Heart left ventricle (tissue), 16 donors: ENCODE measurements at regions of chr6 and their contacts with region 1.

Region 1: DNA sequence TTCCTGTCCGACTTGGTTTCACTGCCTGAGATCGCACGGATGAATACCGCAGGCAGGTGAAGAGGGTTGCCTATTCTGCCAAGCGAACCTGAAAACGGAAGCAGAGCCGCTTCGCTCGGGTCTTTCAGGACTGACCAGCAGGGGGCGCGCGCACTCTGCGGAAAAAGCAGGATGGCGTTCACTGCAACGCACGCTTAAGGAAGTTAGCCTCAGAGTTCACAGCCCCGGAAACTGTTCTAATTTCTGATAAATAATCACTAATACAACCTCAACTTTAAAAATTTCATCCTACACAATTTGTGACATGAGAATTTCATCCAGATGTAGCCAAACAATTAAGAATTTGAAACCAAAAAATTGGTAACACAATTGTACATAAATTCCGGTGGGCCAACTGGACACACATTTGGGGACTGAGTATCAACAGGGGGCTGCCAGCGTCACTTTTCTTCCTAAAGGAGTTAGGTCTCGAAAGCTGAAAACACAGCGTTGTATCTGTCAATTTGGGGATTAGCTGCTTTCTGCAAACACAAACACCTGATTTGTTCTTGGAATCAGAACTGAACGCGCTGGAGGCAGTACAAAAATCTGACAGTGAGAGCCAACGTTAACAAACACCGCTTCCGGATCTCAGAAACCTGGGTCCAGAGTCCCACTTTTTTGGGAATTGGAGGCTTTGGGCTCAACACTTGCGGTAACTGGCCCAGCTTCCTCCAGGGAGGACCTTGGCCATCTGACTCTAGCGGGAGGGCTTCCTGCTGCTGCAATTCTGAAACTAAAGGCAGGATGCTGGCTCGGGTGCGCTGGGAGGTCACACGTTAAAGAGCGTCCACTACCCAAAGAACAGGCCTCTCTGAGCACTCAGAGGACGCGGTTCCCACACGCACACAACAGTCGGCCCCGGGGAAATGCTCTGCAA is 8.8 kb downstream of the PXDC1 start:
- DNase-seq: peak; percentile 83 to 93 (median 87)
- ATAC-seq: peak; percentile 60 to 85 (median 77)
- H3K4me3 ChIP-seq: peak overlapping the region in 9 of 12 donors; percentile 11 to 36 (median 25)
- H3K27ac ChIP-seq: peak overlapping the region; percentile 40 to 88 (median 80)
- H3K4me1 ChIP-seq: peaks cover 6 to 98% (median 80%) of the 10 kb centered on the region in 12 donors
- H3K27me3 ChIP-seq: no peaks in the 10 kb centered on the region
- CTCF ChIP-seq: peak; percentile 90 to 98 (median 95)
- POLR2A ChIP-seq: no peak

Region 2: GRCh38 chr6:3133515-3133914 is 609.2 kb before region 1 on chr6:
- intact Hi-C with region 1: loop called in 3 of 10 experiments (anchors 5 to 10 kb)
- DNase-seq: no peak
- ATAC-seq: no peak
- H3K4me3 ChIP-seq: no peak overlapping the region
- H3K27ac ChIP-seq: no peak overlapping the region
- H3K4me1 ChIP-seq: peaks cover 0 to 9% (median 0%) of the 10 kb centered on the region in 12 donors
- H3K27me3 ChIP-seq: no peaks in the 10 kb centered on the region
- CTCF ChIP-seq: no peak
- POLR2A ChIP-seq: no peak

Region 3: GRCh38 chr6:3868544-3868943 is 125.9 kb after region 1 on chr6:
- intact Hi-C with region 1: no loop called
- DNase-seq: no peak
- ATAC-seq: no peak
- H3K4me3 ChIP-seq: no peak overlapping the region
- H3K27ac ChIP-seq: no peak overlapping the region
- H3K4me1 ChIP-seq: no peaks in the 10 kb centered on the region
- H3K27me3 ChIP-seq: no peaks in the 10 kb centered on the region
- CTCF ChIP-seq: no peak
- POLR2A ChIP-seq: no peak

Region 4: DNA sequence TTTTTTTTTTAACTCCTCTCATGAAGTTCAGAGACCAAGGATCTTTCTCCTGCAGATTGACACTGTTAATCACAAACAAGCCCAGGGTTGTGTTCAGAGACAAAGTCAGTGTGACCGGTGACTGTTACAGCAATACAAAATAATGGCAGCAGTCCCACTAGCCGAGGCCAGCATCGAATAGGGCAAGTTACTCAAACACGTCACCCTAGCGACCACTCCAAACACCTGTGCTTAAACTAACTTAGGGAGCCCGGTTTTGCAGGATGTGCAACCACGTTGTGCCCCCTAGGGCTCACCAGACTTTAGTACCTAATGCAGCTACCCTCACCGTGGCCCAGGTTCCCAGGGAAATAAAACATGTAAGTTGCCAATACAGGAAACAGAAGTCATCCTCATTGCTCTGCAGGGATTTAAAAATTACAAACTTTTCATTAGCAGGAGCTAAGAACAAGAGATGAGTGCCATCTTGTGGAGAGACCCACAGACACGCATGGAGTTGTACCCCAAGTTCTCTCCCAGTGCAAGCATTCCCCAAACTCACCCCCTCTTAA is 144.5 kb after region 1 on chr6:
- intact Hi-C with region 1: loop called in 9 of 10 experiments (anchors 1 to 5 kb)
- DNase-seq: no peak
- ATAC-seq: peak in 3 of 4 donors; percentile 23 to 36 (median 25)
- H3K4me3 ChIP-seq: no peak overlapping the region
- H3K27ac ChIP-seq: peak overlapping the region in 1 of 12 donors; percentile 23
- H3K4me1 ChIP-seq: peaks cover 0 to 52% (median 26%) of the 10 kb centered on the region in 12 donors
- H3K27me3 ChIP-seq: no peaks in the 10 kb centered on the region
- CTCF ChIP-seq: peak; percentile 37 to 70 (median 56)
- POLR2A ChIP-seq: no peak

Region 5: DNA sequence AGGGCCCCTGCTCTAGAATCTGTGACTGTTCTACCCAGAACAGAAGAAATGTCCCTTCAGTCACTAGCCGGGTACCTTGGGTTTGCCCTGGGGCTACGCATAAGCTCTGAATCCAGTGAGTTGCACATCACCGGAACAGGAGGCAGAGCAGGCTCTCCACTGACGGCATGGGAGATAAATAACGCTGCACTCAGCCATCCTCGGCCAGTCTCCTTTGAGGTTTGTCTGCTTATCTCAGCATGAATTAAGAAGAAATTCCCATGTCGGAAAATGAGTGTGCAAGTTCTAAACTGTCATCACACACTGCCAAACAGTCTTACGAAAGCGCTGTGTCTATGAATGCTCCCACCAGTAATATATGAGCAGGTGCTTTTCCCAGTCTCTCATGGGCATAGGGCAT is 197.3 kb after region 1 on chr6:
- intact Hi-C with region 1: loop called in 1 of 10 experiments (anchors 5 kb)
- DNase-seq: no peak
- ATAC-seq: peak in 3 of 4 donors; percentile 33 to 61 (median 39)
- H3K4me3 ChIP-seq: no peak overlapping the region
- H3K27ac ChIP-seq: no peak overlapping the region
- H3K4me1 ChIP-seq: peaks cover 0 to 7% (median 0%) of the 10 kb centered on the region in 12 donors
- H3K27me3 ChIP-seq: peaks cover 0 to 8% (median 0%) of the 10 kb centered on the region in 9 donors
- CTCF ChIP-seq: no peak
- POLR2A ChIP-seq: no peak

Region 6: DNA sequence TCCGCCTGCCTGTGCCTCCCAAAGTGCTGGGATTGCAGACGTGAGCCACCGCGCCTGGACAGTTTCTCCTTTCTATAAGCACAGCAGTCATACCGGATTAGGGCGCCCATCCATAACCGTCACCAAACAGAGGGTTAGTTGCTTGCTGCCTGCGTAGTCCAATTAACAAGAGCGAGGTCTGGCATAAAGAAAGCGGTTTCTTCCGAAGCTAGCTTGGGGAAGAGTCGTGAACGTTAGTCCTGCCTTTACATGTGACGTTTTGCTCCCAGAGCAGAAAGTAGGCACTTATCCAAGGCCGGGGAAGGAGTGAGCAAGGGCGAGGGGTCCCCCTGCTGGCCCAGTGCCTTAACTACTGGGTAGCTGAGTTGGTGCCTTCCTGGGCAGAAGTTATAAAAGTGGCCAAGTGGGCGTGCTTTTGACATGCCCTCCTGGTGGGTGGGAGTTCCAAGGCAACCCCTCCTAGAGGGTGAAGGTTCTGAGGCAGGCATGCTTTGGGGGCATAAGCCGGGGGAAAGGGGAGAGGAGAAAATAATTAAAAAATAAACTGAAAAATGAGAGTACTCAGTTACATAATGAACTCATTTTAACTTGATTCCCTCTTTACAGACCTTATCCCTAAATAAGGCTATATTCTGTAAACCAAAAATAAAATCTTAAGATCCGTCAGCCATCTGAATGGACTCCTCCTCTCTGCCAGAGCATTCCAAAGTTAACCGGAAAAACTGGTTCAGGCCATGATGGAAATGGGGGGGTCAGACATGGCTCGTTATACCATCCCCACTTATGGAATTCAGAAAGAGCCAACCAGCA is 248.2 kb after region 1 on chr6:
- intact Hi-C with region 1: loop called (anchors 1 to 5 kb)
- DNase-seq: peak; percentile 88 to 92 (median 89)
- ATAC-seq: peak; percentile 77 to 95 (median 94)
- H3K4me3 ChIP-seq: peak overlapping the region in 11 of 12 donors; percentile 17 to 69 (median 52)
- H3K27ac ChIP-seq: peak overlapping the region in 9 of 12 donors; percentile 5 to 82 (median 63)
- H3K4me1 ChIP-seq: peaks cover 0 to 20% (median 3%) of the 10 kb centered on the region in 12 donors
- H3K27me3 ChIP-seq: no peaks in the 10 kb centered on the region
- CTCF ChIP-seq: peak; percentile 70 to 92 (median 88)
- POLR2A ChIP-seq: no peak

Region 7: DNA sequence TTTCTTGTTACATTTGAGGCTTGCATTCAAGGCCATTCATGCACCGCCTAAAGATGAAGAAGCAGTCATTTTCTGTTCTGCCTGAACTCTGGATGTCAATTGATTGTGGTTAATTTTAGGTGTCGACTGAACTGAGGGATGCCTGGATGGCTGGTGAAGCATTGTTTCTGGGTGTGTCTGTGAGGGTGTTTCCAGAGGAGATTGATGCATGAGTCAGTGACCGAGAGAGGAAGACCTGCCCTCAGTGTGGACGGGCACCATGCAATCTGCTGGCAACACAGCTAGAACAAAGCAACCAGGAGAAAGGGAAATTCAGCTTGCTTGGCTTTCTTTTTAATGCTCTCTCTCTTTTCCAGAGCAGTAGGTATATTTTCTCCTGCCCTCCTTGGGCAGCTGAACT is 556.8 kb after region 1 on chr6:
- intact Hi-C with region 1: no loop called
- DNase-seq: no peak
- ATAC-seq: no peak
- H3K4me3 ChIP-seq: no peak overlapping the region
- H3K27ac ChIP-seq: no peak overlapping the region
- H3K4me1 ChIP-seq: peaks cover 0 to 11% (median 4%) of the 10 kb centered on the region in 12 donors
- H3K27me3 ChIP-seq: no peaks in the 10 kb centered on the region
- CTCF ChIP-seq: no peak
- POLR2A ChIP-seq: no peak